Right ventricle myocardium superior (tissue), 1 donor: ENCODE measurements at regions of chr1 and their contacts with region 1.

Region 1: GRCh38 chr1:201703621-201704439 is 125.1 kb upstream of the IPO9 start:
- DNase-seq: peak; percentile 90
- ATAC-seq: peak; percentile 90

Region 2: GRCh38 chr1:201515895-201516294 is 187.9 kb before region 1 on chr1:
- intact Hi-C with region 1: no loop called
- DNase-seq: no peak
- ATAC-seq: no peak

Region 3: GRCh38 chr1:201538612-201539551 is 164.9 kb before region 1 on chr1 and contains the start of gene NAV1:
- intact Hi-C with region 1: no loop called
- DNase-seq: peak; percentile 81
- ATAC-seq: peak; percentile 58
- total RNA-seq, gene NAV1: 66.6 TPM

Region 4: GRCh38 chr1:201559679-201560162 is 144.1 kb before region 1 on chr1:
- intact Hi-C with region 1: loop called (anchors 2 kb)
- DNase-seq: peak; percentile 89
- ATAC-seq: peak; percentile 93

Region 5: GRCh38 chr1:202090997-202091396 is 387.2 kb after region 1 on chr1:
- intact Hi-C with region 1: no loop called
- DNase-seq: no peak
- ATAC-seq: no peak